ENCODE measurements at regions of chr6 and their contacts with region 1.

Region 1: DNA sequence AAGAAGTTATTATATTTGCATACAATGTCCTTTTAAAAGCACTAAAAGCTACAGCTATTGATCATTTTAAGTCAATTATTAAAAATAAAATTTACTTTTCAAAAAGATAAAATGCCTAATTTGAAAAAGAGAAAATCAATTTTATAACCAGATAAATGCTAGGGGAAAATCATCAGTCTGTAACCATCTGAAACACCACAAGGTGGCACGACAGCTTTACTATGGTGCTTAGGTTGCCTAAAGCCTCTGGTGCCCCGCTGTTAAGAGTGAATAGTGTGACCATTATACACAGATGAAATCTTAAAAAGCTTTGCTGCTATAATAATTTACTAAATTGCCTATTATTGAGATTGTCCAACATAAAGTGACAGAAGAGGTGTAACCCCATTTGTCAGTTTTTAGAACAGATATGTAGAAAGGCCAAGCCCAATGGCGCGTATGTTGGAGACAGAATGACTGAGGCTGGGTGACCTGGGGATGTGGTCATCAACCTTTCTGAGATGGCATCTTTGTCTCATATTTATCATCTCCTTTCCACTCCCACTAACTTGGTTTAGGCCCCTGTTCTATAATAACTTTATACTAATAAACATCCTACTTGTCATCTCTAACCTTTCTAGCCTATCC is 100.8 kb downstream of the MOXD1 start:
- DNase-seq: peak; percentile 37
- ATAC-seq: peak; percentile 95
- H3K4me3 ChIP-seq: no peak overlapping the region
- H3K27ac ChIP-seq: no peak overlapping the region
- H3K4me1 ChIP-seq: no peaks in the 10 kb centered on the region
- H3K27me3 ChIP-seq: no peaks in the 10 kb centered on the region; a peak in 1 of 5 replicates
- CTCF ChIP-seq: peak; percentile 82
- EP300 ChIP-seq: no peak
- POLR2A ChIP-seq: no peak
- RAD21 ChIP-seq: peak; percentile 72

Region 2: GRCh38 chr6:131914967-131915751 is 385.3 kb before region 1 on chr6:
- CTCF ChIA-PET with region 1: interaction called, 9 read pairs
- POLR2A ChIA-PET with region 1: no interaction called
- in situ Hi-C with region 1: loop called (anchors 5 kb)
- intact Hi-C with region 1: loop called (anchors 1 kb)
- DNase-seq: peak; percentile 69
- ATAC-seq: peak; percentile 78
- H3K4me3 ChIP-seq: peak overlapping the region in 1 of 3 experiments; percentile 17; a peak in 1 of 6 replicates
- H3K27ac ChIP-seq: no peak overlapping the region
- H3K4me1 ChIP-seq: peaks cover 23% of the 10 kb centered on the region; the same call in 1 of the 2 replicates
- H3K27me3 ChIP-seq: no peaks in the 10 kb centered on the region
- CTCF ChIP-seq: peak; percentile 90
- EP300 ChIP-seq: no peak
- POLR2A ChIP-seq: no peak
- RAD21 ChIP-seq: peak; percentile 77

Region 3: GRCh38 chr6:132279592-132280139 is 20.8 kb before region 1 on chr6:
- CTCF ChIA-PET with region 1: interaction called, 88 read pairs
- POLR2A ChIA-PET with region 1: no interaction called
- in situ Hi-C with region 1: no loop called
- intact Hi-C with region 1: loop called (anchors 1 kb)
- DNase-seq: peak; percentile 78
- ATAC-seq: peak; percentile 93
- H3K4me3 ChIP-seq: peak overlapping the region; percentile 35 to 70 (median 63); a peak in 4 of 6 replicates
- H3K27ac ChIP-seq: no peak overlapping the region
- H3K4me1 ChIP-seq: no peaks in the 10 kb centered on the region
- H3K27me3 ChIP-seq: peaks cover 3 to 20% of the 10 kb centered on the region in 2 experiments; a peak in 3 of 5 replicates
- CTCF ChIP-seq: peak; percentile 90
- EP300 ChIP-seq: no peak
- POLR2A ChIP-seq: no peak
- RAD21 ChIP-seq: peak; percentile 89

Region 4: GRCh38 chr6:132391391-132392271 is 91.2 kb after region 1 on chr6:
- CTCF ChIA-PET with region 1: interaction called, 26 read pairs
- POLR2A ChIA-PET with region 1: no interaction called
- in situ Hi-C with region 1: loop called (anchors 5 kb)
- intact Hi-C with region 1: loop called (anchors 1 kb)
- DNase-seq: no peak
- ATAC-seq: no peak
- H3K4me3 ChIP-seq: no peak overlapping the region
- H3K27ac ChIP-seq: no peak overlapping the region
- H3K4me1 ChIP-seq: no peaks in the 10 kb centered on the region
- H3K27me3 ChIP-seq: no peaks in the 10 kb centered on the region; a peak in 1 of 5 replicates
- CTCF ChIP-seq: no peak
- EP300 ChIP-seq: no peak
- POLR2A ChIP-seq: no peak
- RAD21 ChIP-seq: no peak

Region 5: GRCh38 chr6:132465530-132466485 is 165.4 kb after region 1 on chr6:
- CTCF ChIA-PET with region 1: no interaction called
- POLR2A ChIA-PET with region 1: no interaction called
- in situ Hi-C with region 1: no loop called
- intact Hi-C with region 1: no loop called
- DNase-seq: no peak
- ATAC-seq: no peak
- H3K4me3 ChIP-seq: no peak overlapping the region
- H3K27ac ChIP-seq: no peak overlapping the region
- H3K4me1 ChIP-seq: peaks cover 11% of the 10 kb centered on the region
- H3K27me3 ChIP-seq: no peaks in the 10 kb centered on the region
- CTCF ChIP-seq: no peak
- EP300 ChIP-seq: no peak
- POLR2A ChIP-seq: no peak
- RAD21 ChIP-seq: no peak

Region 6: DNA sequence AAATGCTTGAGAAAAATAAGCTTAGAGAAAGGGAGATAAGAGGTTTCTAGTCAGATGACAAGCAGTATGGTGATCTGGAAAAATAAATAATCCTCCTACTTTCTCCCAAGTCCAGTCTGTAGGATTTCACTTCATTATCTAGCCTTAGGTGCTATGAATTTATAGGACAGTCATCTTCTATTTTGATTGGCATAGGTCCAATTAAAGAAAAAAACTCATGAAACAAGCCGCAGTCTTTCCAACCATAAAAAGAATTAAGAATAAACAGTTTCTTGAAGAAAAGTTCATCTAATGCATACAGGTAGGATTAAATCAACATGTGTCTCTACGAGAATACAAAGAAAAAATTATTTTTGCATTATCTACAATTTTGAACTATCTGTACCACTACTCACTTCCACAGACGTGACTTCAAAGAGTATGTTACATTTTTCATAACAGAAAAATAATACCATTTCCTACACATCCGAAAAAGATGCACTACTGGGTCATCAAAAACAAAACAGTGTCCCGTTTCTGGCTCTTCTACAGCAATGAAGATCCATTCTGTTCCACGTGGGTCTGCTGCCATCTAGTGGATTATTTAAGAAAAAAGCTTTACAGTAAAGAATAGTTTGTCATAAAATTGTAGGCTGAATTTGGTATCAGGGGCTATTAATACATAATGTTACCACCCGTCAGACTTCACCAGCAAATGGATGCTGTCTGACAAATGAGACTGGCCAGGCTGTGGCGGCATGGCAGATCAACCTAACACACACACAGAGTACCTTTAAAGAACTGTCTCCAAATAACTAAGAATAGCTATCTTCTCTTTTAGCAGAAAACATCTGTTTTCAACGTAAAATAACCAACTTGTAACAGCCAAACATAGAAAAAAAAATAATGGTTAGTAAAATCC is 183.6 kb after region 1 on chr6:
- CTCF ChIA-PET with region 1: interaction called, 82 read pairs
- POLR2A ChIA-PET with region 1: no interaction called
- in situ Hi-C with region 1: loop called (anchors 5 kb)
- intact Hi-C with region 1: loop called (anchors 1 kb)
- DNase-seq: peak; percentile 75
- ATAC-seq: peak; percentile 88
- H3K4me3 ChIP-seq: no peak overlapping the region
- H3K27ac ChIP-seq: no peak overlapping the region
- H3K4me1 ChIP-seq: no peaks in the 10 kb centered on the region
- H3K27me3 ChIP-seq: no peaks in the 10 kb centered on the region
- CTCF ChIP-seq: peak; percentile 83
- EP300 ChIP-seq: no peak
- POLR2A ChIP-seq: no peak
- RAD21 ChIP-seq: peak; percentile 85

Measured in HepG2 (cell line).